GM10248 (cell line): ENCODE measurements at regions of chr1 and their contacts with region 1.

Region 1: DNA sequence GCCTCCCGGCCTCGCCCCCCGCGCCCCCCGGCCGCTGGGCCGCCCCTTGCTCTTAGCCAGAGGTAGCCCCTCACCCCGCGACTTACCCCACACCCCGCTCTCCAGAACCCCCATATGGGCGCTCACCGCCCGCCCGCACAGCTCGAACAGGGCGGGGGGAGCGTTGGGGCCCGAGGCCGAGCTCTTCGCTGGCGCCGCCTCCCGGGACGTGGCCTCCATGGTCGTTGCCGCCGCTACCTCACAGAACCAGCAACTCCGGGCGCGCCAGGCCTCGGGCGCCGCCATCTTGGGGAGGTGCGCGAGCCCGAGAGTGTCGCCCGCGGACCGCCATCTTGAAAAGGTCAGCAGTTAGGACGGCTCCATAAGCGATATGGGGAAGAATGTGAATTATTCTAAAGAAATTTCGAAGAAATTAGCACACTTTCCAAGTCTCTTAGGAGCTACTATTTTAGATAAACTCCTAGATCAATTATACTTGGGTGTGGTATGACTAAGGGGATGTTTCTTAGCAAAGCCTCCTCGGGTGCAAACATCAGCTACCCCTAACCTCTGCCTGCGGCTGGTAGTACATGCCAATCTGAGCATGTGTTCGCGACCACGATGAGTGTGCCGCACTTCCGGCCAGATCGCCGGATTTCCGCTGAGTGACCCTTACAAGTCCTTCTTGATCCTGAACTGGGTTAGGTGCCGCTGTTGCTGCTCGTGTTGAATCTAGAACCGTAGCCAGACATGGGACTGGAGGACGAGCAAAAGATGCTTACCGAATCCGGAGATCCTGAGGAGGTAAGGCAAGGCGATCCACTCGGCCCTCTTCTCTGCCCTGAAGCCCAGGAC is at the starts of genes LRRC41 and UQCRH:
- DNase-seq: peak; percentile 91
- CTCF ChIP-seq: no peak

Region 2: GRCh38 chr1:46315669-46316403 is 12.6 kb after region 1 on chr1:
- CTCF ChIA-PET with region 1: interaction called, 18 read pairs
- POLR2A ChIA-PET with region 1: no interaction called
- DNase-seq: no peak
- CTCF ChIP-seq: no peak

Region 3: GRCh38 chr1:46333300-46334029 is 30.2 kb after region 1 on chr1:
- CTCF ChIA-PET with region 1: interaction called, 10 read pairs
- POLR2A ChIA-PET with region 1: interaction called, 6 read pairs
- DNase-seq: peak; percentile 48
- CTCF ChIP-seq: peak; percentile 45

Region 4: GRCh38 chr1:46340404-46341221 is 37.4 kb after region 1 on chr1 and contains the start of gene NSUN4:
- CTCF ChIA-PET with region 1: interaction called, 13 read pairs
- POLR2A ChIA-PET with region 1: interaction called, 4 read pairs
- DNase-seq: peak; percentile 83
- CTCF ChIP-seq: peak; percentile 88